HCT116 (cell line): ENCODE measurements at regions of chr6 and their contacts with region 1.

Region 1: GRCh38 chr6:42118162-42119001 is 24.0 kb downstream of the C6orf132 start:
- DNase-seq: no peak
- ATAC-seq: peak; percentile 67
- H3K4me3 ChIP-seq: peak overlapping the region in 1 of 2 experiments; percentile 27; a peak in 2 of 4 replicates
- H3K27ac ChIP-seq: peak overlapping the region; percentile 60
- H3K4me1 ChIP-seq: peaks cover 65 to 80% of the 10 kb centered on the region in 2 experiments
- H3K27me3 ChIP-seq: no peaks in the 10 kb centered on the region
- CTCF ChIP-seq: no peak
- POLR2A ChIP-seq: no peak
- RAD21 ChIP-seq: no peak

Region 2: DNA sequence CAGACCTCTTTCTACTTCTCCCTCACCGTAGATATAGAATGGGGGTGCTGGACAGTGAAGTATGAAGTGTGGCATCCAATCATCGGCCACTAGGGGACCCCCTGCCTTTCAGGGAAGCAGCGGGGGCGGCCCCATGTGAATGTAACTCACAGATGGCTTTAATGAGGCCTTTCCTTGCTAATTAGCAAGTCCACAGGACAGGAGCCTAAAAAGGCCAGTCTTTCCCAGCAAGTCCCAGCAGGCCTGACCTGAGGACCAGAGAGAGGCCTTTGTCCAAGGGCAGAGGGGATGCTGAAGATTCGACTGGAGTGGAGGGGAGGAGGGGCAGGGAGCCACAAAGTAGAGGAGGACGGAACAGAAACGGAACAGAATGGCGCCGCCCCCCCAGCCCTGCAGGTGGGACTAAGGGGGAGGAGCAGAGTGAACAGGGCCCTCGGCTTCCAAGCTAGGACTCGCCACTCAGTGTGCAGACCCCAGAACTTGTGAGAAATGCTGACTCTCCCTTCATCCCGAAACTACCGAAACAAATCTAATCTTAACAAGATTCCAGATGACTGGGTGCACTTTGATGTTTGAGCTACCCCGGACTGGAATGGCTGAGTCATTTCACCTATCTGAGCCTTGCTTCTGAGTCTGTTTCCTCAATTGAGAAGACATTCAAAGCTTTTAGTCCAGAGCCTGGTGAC is 18.3 kb after region 1 on chr6:
- CTCF ChIA-PET with region 1: no interaction called
- POLR2A ChIA-PET with region 1: interaction called, 11 read pairs
- RAD21 ChIA-PET with region 1: interaction called in 1 of 2 experiments, 3 read pairs
- intact Hi-C with region 1: no loop called
- DNase-seq: peak; percentile 88
- ATAC-seq: peak; percentile 75
- H3K4me3 ChIP-seq: peak overlapping the region; percentile 28 to 36
- H3K27ac ChIP-seq: peak overlapping the region; percentile 89
- H3K4me1 ChIP-seq: peaks cover 63 to 90% of the 10 kb centered on the region in 2 experiments
- H3K27me3 ChIP-seq: no peaks in the 10 kb centered on the region
- CTCF ChIP-seq: peak in 2 of 3 experiments; percentile 45 to 57; a peak in 4 of 6 replicates
- POLR2A ChIP-seq: no peak
- RAD21 ChIP-seq: no peak

Region 3: GRCh38 chr6:42142118-42142931 is 23.9 kb after region 1 on chr6 and contains the start of gene C6orf132:
- CTCF ChIA-PET with region 1: no interaction called
- POLR2A ChIA-PET with region 1: interaction called, 11 read pairs
- RAD21 ChIA-PET with region 1: no interaction called
- intact Hi-C with region 1: loop called (anchors 2 kb)
- DNase-seq: no peak
- ATAC-seq: peak; percentile 77
- H3K4me3 ChIP-seq: peak within 1 kb of the TSS; percentile 76 to 88
- H3K27ac ChIP-seq: peak within 1 kb of the TSS; percentile 77
- H3K4me1 ChIP-seq: peaks cover 52 to 58% of the 10 kb centered on the region in 2 experiments
- H3K27me3 ChIP-seq: no peaks in the 10 kb centered on the region
- CTCF ChIP-seq: no peak
- POLR2A ChIP-seq: no peak
- RAD21 ChIP-seq: no peak
- total RNA-seq, gene C6orf132: 18.9 TPM